ENCODE measurements at regions of chr15 and their contacts with region 1.

Region 1: GRCh38 chr15:57306161-57306943 is 70.0 kb upstream of the CGNL1 start:
- DNase-seq: peak; percentile 73 to 90 (median 85)
- H3K4me3 ChIP-seq: peak overlapping the region; percentile 39
- H3K27ac ChIP-seq: peak overlapping the region in 1 of 2 donors; percentile 5
- H3K4me1 ChIP-seq: peaks cover 1% of the 10 kb centered on the region
- H3K27me3 ChIP-seq: no peaks in the 10 kb centered on the region
- CTCF ChIP-seq: peak; percentile 60 to 76 (median 63)
- EP300 ChIP-seq: no peak
- POLR2A ChIP-seq: no peak

Region 2: DNA sequence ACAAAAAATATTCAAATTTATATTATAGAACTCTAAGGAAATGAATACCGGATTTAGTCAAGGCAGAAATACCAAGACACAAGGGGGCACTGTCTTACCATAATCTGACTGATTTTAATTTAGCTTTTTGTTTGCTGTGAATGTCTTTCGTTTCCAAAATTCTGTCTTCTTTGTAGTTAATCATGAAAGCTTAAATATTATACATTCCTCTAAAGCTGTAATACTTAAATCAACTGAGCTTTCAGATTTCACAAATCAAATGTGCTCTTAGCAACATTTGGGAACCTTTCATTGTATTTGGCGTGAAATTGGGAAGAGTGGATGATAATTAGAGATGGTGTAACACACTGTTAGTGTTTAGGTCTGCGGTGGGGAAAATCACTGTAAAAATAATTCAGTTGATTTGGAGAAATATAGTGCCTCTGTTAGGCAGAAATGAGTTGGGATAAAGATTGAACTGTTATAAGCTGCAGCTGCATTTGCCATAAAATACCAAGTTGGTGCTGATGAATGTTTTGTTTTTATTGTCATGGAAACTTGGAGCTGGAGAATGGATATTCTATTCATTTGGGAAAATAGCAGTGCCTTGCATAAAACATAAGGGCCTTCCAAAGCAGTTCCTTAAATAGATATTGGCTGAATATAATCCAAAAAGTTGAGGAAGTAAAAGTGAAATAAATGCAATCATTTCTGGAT is 159.7 kb before region 1 on chr15:
- intact Hi-C with region 1: loop called in 3 of 4 experiments (anchors 10 kb)
- DNase-seq: no peak
- H3K4me3 ChIP-seq: no peak overlapping the region
- H3K27ac ChIP-seq: no peak overlapping the region
- H3K4me1 ChIP-seq: peaks cover 3% of the 10 kb centered on the region
- H3K27me3 ChIP-seq: no peaks in the 10 kb centered on the region
- CTCF ChIP-seq: peak; percentile 29 to 68 (median 55)
- EP300 ChIP-seq: no peak
- POLR2A ChIP-seq: no peak

Region 3: DNA sequence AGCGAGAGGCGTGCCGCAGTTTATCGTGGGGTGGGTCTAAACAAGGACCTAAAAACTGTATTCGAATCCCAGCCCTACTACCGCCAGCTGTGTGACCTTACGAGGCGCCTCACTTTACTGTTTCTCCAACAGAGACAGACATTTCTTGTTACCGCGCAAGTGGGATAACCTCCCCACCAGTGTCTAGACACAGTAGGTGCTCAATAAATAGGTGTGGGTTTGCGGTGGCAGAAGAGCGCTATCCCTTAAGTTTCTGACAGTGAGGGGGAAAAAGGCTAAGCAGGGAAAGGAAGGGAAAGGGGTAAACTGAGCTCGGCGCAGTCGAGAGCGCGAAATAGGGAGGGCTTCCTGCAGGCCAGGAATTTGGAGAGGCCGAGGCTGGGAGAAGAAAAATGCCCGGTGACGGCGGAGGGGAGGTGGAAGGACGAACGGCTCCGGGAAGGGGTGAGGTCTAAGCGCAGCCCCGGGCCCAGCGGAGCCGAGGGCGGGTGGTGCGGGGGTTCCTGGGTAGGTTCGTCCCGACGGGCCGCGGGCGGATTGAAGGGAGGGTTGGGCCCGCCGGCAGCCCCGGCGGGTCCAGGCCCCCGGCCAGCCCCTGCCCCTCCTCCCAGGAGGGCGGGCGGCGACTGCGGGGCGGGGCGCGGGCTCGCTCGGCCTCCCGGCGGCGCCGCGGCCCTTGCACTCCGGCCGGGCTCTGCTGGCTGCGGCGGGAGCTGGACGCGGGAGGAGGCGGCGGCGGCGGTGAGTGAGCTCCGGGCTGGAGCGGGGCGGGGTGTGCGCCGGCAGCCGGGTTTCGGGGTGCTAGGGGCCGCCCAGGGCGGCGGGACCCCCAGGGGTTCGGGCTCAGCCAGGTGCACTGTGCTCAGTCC is 69.7 kb after region 1 on chr15 and contains the start of gene CGNL1:
- intact Hi-C with region 1: no loop called
- DNase-seq: peak; percentile 51 to 78 (median 66)
- H3K4me3 ChIP-seq: peak within 1 kb of the TSS; percentile 87
- H3K27ac ChIP-seq: peak within 1 kb of the TSS in 1 of 2 donors; percentile 48
- H3K4me1 ChIP-seq: peaks cover 4% of the 10 kb centered on the region
- H3K27me3 ChIP-seq: no peaks in the 10 kb centered on the region
- CTCF ChIP-seq: no peak
- EP300 ChIP-seq: no peak
- POLR2A ChIP-seq: peak; percentile 10
- total RNA-seq, gene CGNL1: 7.8 to 26.1 (median 13.6) TPM